ENCODE measurements at regions of chr17 and their contacts with region 1.

Region 1: GRCh38 chr17:49739641-49740271 is 24.2 kb downstream of the FAM117A start:
- DNase-seq: peak; percentile 94 to 99 (median 97)
- H3K4me3 ChIP-seq: peak overlapping the region; percentile 81
- H3K4me3 Mint-ChIP-seq: peak overlapping the region; percentile 90 to 98 (median 95)
- H3K27ac ChIP-seq: peak overlapping the region; percentile 88
- H3K27ac Mint-ChIP-seq: peak overlapping the region; percentile 97 to 100 (median 100)
- H3K4me1 ChIP-seq: peaks cover 95% of the 10 kb centered on the region
- H3K4me1 Mint-ChIP-seq: peaks cover 86 to 97% (median 93%) of the 10 kb centered on the region in 3 donors
- H3K27me3 ChIP-seq: no peaks in the 10 kb centered on the region
- H3K27me3 Mint-ChIP-seq: no peaks in the 10 kb centered on the region

Region 2: GRCh38 chr17:49688848-49689247 is 50.9 kb before region 1 on chr17:
- CTCF ChIA-PET with region 1: no interaction called
- POLR2A ChIA-PET with region 1: no interaction called
- DNase-seq: no peak
- H3K4me3 ChIP-seq: peak overlapping the region; percentile 26
- H3K4me3 Mint-ChIP-seq: peak overlapping the region; percentile 2 to 90 (median 74)
- H3K27ac ChIP-seq: no peak overlapping the region
- H3K27ac Mint-ChIP-seq: peak overlapping the region in 7 of 8 donors; percentile 11 to 88 (median 78)
- H3K4me1 ChIP-seq: peaks cover 34% of the 10 kb centered on the region
- H3K4me1 Mint-ChIP-seq: peaks cover 33 to 45% (median 36%) of the 10 kb centered on the region in 3 donors
- H3K27me3 ChIP-seq: no peaks in the 10 kb centered on the region
- H3K27me3 Mint-ChIP-seq: no peaks in the 10 kb centered on the region

Region 3: GRCh38 chr17:49755663-49756283 is 16.0 kb after region 1 on chr17:
- CTCF ChIA-PET with region 1: interaction called, 11 read pairs
- POLR2A ChIA-PET with region 1: interaction called, 53 read pairs
- DNase-seq: no peak
- H3K4me3 ChIP-seq: peak overlapping the region; percentile 24
- H3K4me3 Mint-ChIP-seq: peak overlapping the region; percentile 1 to 83 (median 10)
- H3K27ac ChIP-seq: no peak overlapping the region
- H3K27ac Mint-ChIP-seq: peak overlapping the region; percentile 43 to 95 (median 87)
- H3K4me1 ChIP-seq: peaks cover 83% of the 10 kb centered on the region
- H3K4me1 Mint-ChIP-seq: peaks cover 72 to 88% (median 82%) of the 10 kb centered on the region in 3 donors
- H3K27me3 ChIP-seq: no peaks in the 10 kb centered on the region
- H3K27me3 Mint-ChIP-seq: no peaks in the 10 kb centered on the region